ENCODE measurements at regions of chr1 and their contacts with region 1.

Region 1: DNA sequence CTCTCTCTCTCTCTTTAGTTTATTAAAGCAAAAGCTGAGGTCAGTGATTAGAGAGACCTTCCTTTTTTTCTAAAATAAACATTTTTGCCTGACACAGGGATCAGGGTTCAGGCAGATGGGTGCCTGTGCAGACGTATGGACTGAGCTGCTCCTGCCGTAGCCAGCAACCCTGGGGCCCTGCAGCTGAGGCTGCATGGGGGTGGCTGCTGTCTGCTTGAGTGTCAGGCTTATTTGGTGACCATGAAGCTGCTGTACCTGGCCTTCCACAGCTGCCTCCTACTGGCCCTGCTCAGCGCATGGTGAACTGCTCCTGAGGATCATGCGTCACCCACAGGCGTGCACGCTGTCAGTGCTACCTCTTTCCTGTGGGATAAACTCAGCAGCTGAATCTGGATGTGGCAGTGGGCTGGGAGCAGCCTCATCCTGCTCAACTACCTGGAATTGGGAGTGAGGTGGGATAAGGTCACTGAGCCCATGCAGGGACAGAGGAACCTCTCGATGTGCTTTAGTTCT is 35.1 kb downstream of the GNG4 start:
- DNase-seq: no peak
- H3K4me3 Mint-ChIP-seq: no peak overlapping the region
- H3K27ac Mint-ChIP-seq: no peak overlapping the region
- H3K4me1 Mint-ChIP-seq: no peaks in the 10 kb centered on the region
- H3K27me3 Mint-ChIP-seq: no peaks in the 10 kb centered on the region

Region 2: GRCh38 chr1:235601104-235601503 is 13.4 kb before region 1 on chr1:
- CTCF ChIA-PET with region 1: interaction called, 10 read pairs
- POLR2A ChIA-PET with region 1: no interaction called
- intact Hi-C with region 1: no loop called
- DNase-seq: peak; percentile 30
- H3K4me3 Mint-ChIP-seq: no peak overlapping the region
- H3K27ac Mint-ChIP-seq: no peak overlapping the region
- H3K4me1 Mint-ChIP-seq: no peaks in the 10 kb centered on the region
- H3K27me3 Mint-ChIP-seq: no peaks in the 10 kb centered on the region

Measured in activated CD4-positive, alpha-beta memory T cell treated with anti-CD3 and anti-CD28 coated beads for 36 hours (primary cell).